ENCODE measurements at regions of chr4 and their contacts with region 1.

Region 1: DNA sequence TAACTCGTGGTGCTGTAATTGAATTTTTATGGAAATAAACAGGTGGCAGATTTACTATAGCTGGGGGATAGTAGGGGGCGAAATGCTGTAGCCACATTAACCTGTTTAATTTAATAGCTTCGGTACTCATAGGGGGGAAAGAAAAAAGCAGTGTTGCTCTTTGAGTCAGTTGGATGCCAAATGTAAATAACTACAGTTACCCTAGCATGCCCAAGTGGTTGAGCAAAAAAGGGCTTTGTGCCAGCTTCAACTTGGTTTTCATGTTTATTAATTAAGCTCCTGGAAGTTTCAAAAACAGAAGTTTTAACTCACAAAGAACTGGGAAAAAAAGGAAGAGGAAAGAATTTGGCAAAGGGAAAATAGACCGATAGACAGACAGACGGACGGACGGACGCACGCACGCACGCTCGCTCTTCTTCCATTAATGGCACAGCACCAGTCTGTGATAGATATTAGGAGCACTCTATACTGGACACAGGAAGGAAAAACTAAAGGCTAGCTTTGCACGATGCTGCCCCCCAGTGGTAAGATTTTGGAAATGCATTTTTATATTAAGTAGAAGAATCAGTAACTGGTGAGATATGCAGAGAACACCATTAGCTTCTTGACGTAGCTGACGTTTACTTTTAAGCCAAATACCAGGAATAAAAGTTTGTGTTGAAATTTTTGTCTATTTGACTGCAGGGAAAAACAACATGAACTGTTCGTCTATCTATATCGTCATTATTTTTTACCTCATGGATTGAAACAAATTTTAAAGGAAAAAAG is 151.8 kb downstream of the SLC7A11 start:
- DNase-seq: peak; percentile 90
- H3K4me3 ChIP-seq: peak overlapping the region in 2 of 3 experiments; percentile 11 to 53
- H3K27ac ChIP-seq: no peak overlapping the region
- H3K4me1 ChIP-seq: peaks cover 6% of the 10 kb centered on the region
- H3K27me3 ChIP-seq: no peaks in the 10 kb centered on the region
- CTCF ChIP-seq: peak; percentile 60 to 62
- POLR2A ChIP-seq: no peak

Region 2: DNA sequence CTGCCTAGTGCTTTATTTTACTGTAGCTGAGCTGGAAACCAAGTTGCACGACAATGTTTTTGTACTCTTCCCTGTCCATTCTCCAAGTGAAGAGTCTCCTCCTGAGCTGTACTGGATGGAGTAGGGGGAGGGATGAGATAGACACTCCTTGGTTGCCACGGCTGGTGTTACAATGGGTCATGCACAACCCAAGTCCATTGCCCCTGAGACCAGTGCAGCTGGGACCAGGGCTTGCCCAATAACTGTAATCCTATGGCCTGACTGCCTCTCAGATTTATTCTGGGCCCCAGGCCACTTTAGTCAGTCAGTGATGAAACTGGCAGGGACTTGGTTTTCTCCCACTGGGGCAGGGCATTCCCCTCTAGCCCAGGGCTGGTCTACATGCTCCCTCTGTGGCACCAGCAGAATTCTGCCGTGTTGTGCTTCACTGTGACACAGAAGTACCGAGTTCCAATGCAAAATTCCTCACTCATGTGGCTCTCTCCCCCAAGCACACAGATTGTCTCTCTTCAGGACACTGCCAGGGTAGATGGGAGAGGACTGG is 354.7 kb before region 1 on chr4:
- CTCF ChIA-PET with region 1: no interaction called
- POLR2A ChIA-PET with region 1: no interaction called
- dilution Hi-C with region 1: no loop called
- intact Hi-C with region 1: loop called (anchors 2 kb)
- DNase-seq: no peak
- H3K4me3 ChIP-seq: no peak overlapping the region
- H3K27ac ChIP-seq: no peak overlapping the region
- H3K4me1 ChIP-seq: no peaks in the 10 kb centered on the region
- H3K27me3 ChIP-seq: no peaks in the 10 kb centered on the region
- CTCF ChIP-seq: no peak
- POLR2A ChIP-seq: no peak

Region 3: GRCh38 chr4:138053641-138054301 is 36.6 kb before region 1 on chr4:
- CTCF ChIA-PET with region 1: interaction called, 36 read pairs
- POLR2A ChIA-PET with region 1: no interaction called
- dilution Hi-C with region 1: no loop called
- intact Hi-C with region 1: loop called (anchors 5 kb)
- DNase-seq: peak; percentile 93
- H3K4me3 ChIP-seq: peak overlapping the region in 1 of 3 experiments; percentile 6
- H3K27ac ChIP-seq: peak overlapping the region; percentile 92
- H3K4me1 ChIP-seq: peaks cover 63% of the 10 kb centered on the region
- H3K27me3 ChIP-seq: no peaks in the 10 kb centered on the region
- CTCF ChIP-seq: no peak
- POLR2A ChIP-seq: peak; percentile 64

Region 4: DNA sequence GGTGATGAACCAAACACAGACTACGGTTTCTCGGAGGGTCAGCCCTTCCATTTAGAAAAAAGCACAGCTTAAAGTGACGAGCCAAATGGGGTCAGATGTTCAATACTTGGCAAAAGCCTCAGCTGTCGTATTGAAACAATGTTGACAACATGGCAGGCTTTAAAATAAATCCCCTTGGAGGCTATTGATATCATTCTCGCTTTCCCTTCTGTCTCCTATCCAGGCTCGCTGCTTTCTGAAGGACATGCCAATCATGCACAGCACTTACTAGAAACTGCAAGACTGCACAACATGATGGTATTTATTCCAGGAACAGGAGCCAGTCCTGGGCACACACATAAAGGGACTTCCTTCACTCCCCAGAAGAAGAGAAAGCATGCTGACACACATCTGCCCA is 13.9 kb after region 1 on chr4:
- CTCF ChIA-PET with region 1: interaction called, 20 read pairs
- POLR2A ChIA-PET with region 1: no interaction called
- dilution Hi-C with region 1: no loop called
- intact Hi-C with region 1: no loop called
- DNase-seq: no peak
- H3K4me3 ChIP-seq: no peak overlapping the region
- H3K27ac ChIP-seq: no peak overlapping the region
- H3K4me1 ChIP-seq: peaks cover 3% of the 10 kb centered on the region
- H3K27me3 ChIP-seq: no peaks in the 10 kb centered on the region
- CTCF ChIP-seq: no peak
- POLR2A ChIP-seq: no peak

Region 5: DNA sequence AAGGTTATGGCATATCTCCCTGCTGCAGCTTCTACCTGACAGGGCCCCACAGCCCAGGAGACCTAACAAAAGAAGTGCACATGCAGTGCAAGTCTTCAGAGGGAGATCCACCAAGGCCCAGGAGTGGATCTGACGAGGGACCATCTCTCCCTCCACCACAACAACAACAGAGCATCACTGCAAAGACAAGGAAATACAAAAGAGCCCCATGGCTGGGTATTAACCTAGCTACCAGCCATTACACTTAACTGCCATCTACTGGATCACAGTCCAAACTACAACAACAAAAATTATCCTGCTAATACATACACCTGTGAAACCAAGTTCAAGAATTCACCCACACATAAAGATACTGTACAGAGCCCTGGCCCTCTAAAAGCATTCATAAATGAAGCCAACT is 432.0 kb after region 1 on chr4:
- CTCF ChIA-PET with region 1: interaction called, 13 read pairs
- POLR2A ChIA-PET with region 1: no interaction called
- dilution Hi-C with region 1: no loop called
- intact Hi-C with region 1: loop called (anchors 2 kb)
- DNase-seq: peak; percentile 21
- H3K4me3 ChIP-seq: no peak overlapping the region
- H3K27ac ChIP-seq: no peak overlapping the region
- H3K4me1 ChIP-seq: no peaks in the 10 kb centered on the region
- H3K27me3 ChIP-seq: no peaks in the 10 kb centered on the region
- CTCF ChIP-seq: peak; percentile 27 to 40
- POLR2A ChIP-seq: no peak

Region 6: DNA sequence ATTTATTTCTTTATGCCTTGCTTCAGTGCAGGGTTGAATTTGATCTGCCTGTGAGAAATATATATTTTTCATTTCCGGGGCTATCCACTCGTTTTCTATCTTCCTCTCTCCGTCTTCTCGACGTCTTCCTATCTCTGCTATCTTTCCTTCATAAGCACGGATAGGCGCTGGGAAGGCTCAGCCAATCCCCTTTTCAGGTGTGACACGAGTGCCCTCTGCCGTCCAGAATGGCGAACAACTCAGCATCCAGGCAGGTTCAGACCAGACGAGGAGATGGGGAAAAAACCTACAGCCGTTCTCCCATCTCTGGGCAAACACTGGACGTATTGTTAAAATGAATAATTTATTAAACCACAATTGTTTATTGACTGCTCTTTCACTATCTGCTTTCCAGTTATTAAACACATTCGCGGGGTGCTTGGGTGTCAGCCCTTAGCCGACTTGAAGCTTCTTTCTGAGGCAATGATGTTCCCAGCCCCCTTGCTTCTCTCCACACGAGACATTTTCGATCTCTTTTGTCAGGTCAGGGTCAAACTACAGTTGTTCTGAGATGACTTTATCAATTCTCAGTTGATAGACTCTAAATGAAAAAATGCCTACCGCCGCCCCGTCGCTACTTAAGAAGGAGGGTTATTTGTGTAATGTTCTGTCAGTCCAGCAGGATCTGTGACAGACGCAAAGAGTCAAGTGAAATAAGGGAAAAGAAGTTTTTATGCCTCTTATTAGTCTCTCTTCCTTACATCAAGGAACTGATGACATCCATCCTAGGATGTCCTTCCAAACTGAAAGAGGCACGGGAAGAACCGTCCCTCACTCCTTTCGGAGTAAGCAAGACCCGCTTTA is 829.0 kb after region 1 on chr4:
- CTCF ChIA-PET with region 1: no interaction called
- POLR2A ChIA-PET with region 1: no interaction called
- dilution Hi-C with region 1: no loop called
- intact Hi-C with region 1: loop called (anchors 2 kb)
- DNase-seq: peak; percentile 74
- H3K4me3 ChIP-seq: no peak overlapping the region
- H3K27ac ChIP-seq: no peak overlapping the region
- H3K4me1 ChIP-seq: no peaks in the 10 kb centered on the region
- H3K27me3 ChIP-seq: no peaks in the 10 kb centered on the region
- CTCF ChIP-seq: peak; percentile 72 to 75
- POLR2A ChIP-seq: no peak

Measured in endothelial cell of umbilical vein (primary cell).